ENCODE measurements at regions of chr2 and their contacts with region 1.

Region 1: GRCh38 chr2:201260302-201260800 is at the start of gene CASP8:
- DNase-seq: no peak
- H3K4me3 ChIP-seq: no peak within 1 kb of the TSS
- H3K27ac ChIP-seq: no peak within 1 kb of the TSS
- H3K4me1 ChIP-seq: peaks cover 0 to 9% (median 6%) of the 10 kb centered on the region in 4 experiments; a peak in 6 of 7 replicates
- H3K27me3 ChIP-seq: peaks cover 0 to 3% (median 0%) of the 10 kb centered on the region in 4 experiments; a peak in 1 of 7 replicates
- CTCF ChIP-seq: no peak
- EP300 ChIP-seq: no peak
- POLR2A ChIP-seq: no peak
- RAD21 ChIP-seq: no peak
- total RNA-seq, gene CASP8: 3.6 and 3.7 TPM in 2 replicates

Region 2: GRCh38 chr2:201275990-201276389 is 15.6 kb after region 1 on chr2:
- CTCF ChIA-PET with region 1: interaction called, 21 read pairs
- POLR2A ChIA-PET with region 1: no interaction called
- DNase-seq: peak in 1 of 2 experiments; percentile 60
- H3K4me3 ChIP-seq: no peak overlapping the region
- H3K27ac ChIP-seq: no peak overlapping the region
- H3K4me1 ChIP-seq: no peaks in the 10 kb centered on the region
- H3K27me3 ChIP-seq: no peaks in the 10 kb centered on the region
- CTCF ChIP-seq: peak; percentile 35 to 97 (median 93)
- EP300 ChIP-seq: no peak
- POLR2A ChIP-seq: no peak
- RAD21 ChIP-seq: peak; percentile 64 to 74

Measured in H1 (cell line).